B cell (primary cell): ENCODE measurements at regions of chr1 and their contacts with region 1.

Region 1: DNA sequence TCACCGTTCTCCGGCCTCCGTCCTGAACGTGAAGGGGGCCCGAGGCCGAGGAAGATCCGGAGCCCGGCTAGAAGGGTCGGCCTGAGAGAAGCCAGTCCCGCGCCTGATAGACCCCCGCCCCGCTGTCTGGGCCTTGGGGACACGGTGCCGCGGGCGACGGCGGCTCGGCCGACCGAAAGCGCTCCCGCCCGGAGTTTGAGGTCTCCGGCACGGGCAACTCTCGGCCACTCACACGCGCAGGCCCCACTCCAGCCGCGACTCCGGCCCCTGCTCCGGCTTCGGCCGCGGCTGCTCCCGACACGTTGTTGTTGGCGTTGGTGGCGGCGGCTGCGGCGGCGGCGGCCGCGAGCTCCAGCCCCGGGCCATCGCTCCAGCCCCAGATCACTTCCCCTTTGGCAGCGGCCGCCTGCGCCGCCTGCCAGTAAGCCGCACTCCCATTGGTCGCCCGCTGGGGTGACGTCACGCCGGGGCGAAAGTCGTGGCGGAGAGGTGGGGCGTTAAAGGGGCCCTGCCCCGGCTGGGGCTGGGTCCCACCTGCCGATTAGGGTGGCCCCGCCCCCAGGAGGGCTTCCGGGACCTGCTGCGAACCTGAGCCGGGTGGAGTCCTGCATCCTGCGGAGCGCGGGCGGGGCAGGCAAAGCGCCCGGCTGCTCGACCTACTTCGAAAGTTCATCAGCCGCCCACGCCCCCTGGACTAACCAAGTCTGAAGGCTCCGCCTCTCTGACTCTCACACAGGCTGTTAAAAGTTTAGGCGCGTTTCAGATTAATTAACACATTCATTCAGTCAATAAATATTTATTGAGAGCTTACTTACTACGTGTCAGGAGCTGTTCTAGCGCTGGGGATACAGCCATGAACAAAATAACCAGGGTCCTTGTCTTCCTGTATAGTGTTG is at the start of gene EFCAB14:
- DNase-seq: peak; percentile 99
- ATAC-seq: peak; percentile 99
- H3K4me3 ChIP-seq: peak within 1 kb of the TSS; percentile 84 to 95 (median 87)
- H3K4me3 Mint-ChIP-seq: peak within 1 kb of the TSS; percentile 89
- H3K27ac ChIP-seq: peak within 1 kb of the TSS; percentile 48 to 89
- H3K27ac Mint-ChIP-seq: peak within 1 kb of the TSS; percentile 95
- H3K4me1 ChIP-seq: peaks cover 24 to 25% of the 10 kb centered on the region in 2 donors
- H3K4me1 Mint-ChIP-seq: peaks cover 40% of the 10 kb centered on the region
- H3K27me3 ChIP-seq: no peaks in the 10 kb centered on the region
- H3K27me3 Mint-ChIP-seq: no peaks in the 10 kb centered on the region
- CTCF ChIP-seq: no peak
- total RNA-seq, gene EFCAB14: 90.0 and 98.8 TPM in 2 replicates

Region 2: GRCh38 chr1:46603858-46604549 is 115.0 kb before region 1 on chr1 and contains the start of gene MKNK1:
- CTCF ChIA-PET with region 1: interaction called, 5 read pairs
- POLR2A ChIA-PET with region 1: interaction called, 3 read pairs
- intact Hi-C with region 1: loop called (anchors 1 kb)
- DNase-seq: peak; percentile 98
- ATAC-seq: peak; percentile 99
- H3K4me3 ChIP-seq: peak within 1 kb of the TSS; percentile 72 to 95 (median 92)
- H3K4me3 Mint-ChIP-seq: peak within 1 kb of the TSS; percentile 96
- H3K27ac ChIP-seq: peak within 1 kb of the TSS; percentile 14 to 62
- H3K27ac Mint-ChIP-seq: peak within 1 kb of the TSS; percentile 95
- H3K4me1 ChIP-seq: peaks cover 12 to 15% of the 10 kb centered on the region in 2 donors
- H3K4me1 Mint-ChIP-seq: peaks cover 27% of the 10 kb centered on the region
- H3K27me3 ChIP-seq: no peaks in the 10 kb centered on the region
- H3K27me3 Mint-ChIP-seq: no peaks in the 10 kb centered on the region
- CTCF ChIP-seq: no peak
- total RNA-seq, gene MKNK1: 69.5 and 73.0 TPM in 2 replicates

Region 3: GRCh38 chr1:46616277-46617107 is 102.5 kb before region 1 on chr1 and contains the start of gene MOB3C:
- CTCF ChIA-PET with region 1: no interaction called
- POLR2A ChIA-PET with region 1: no interaction called
- intact Hi-C with region 1: loop called (anchors 1 kb)
- DNase-seq: peak; percentile 72
- ATAC-seq: peak; percentile 88
- H3K4me3 ChIP-seq: peak within 1 kb of the TSS; percentile 73 to 95 (median 82)
- H3K4me3 Mint-ChIP-seq: peak within 1 kb of the TSS; percentile 94
- H3K27ac ChIP-seq: peak within 1 kb of the TSS; percentile 74 to 85
- H3K27ac Mint-ChIP-seq: peak within 1 kb of the TSS; percentile 93
- H3K4me1 ChIP-seq: peaks cover 56 to 74% of the 10 kb centered on the region in 2 donors
- H3K4me1 Mint-ChIP-seq: peaks cover 61% of the 10 kb centered on the region
- H3K27me3 ChIP-seq: no peaks in the 10 kb centered on the region
- H3K27me3 Mint-ChIP-seq: no peaks in the 10 kb centered on the region
- CTCF ChIP-seq: no peak
- total RNA-seq, gene MOB3C: 19.2 and 19.3 TPM in 2 replicates

Region 4: GRCh38 chr1:46667782-46668760 is 50.9 kb before region 1 on chr1 and contains the start of gene ATPAF1:
- CTCF ChIA-PET with region 1: interaction called, 4 read pairs
- POLR2A ChIA-PET with region 1: no interaction called
- intact Hi-C with region 1: loop called (anchors 1 kb)
- DNase-seq: peak; percentile 72
- ATAC-seq: peak; percentile 83
- H3K4me3 ChIP-seq: peak within 1 kb of the TSS; percentile 61 to 89 (median 77)
- H3K4me3 Mint-ChIP-seq: peak within 1 kb of the TSS; percentile 85
- H3K27ac ChIP-seq: peak within 1 kb of the TSS in 1 of 2 donors; percentile 50
- H3K27ac Mint-ChIP-seq: peak within 1 kb of the TSS; percentile 51
- H3K4me1 ChIP-seq: peaks cover 13 to 16% of the 10 kb centered on the region in 2 donors
- H3K4me1 Mint-ChIP-seq: peaks cover 14% of the 10 kb centered on the region
- H3K27me3 ChIP-seq: no peaks in the 10 kb centered on the region
- H3K27me3 Mint-ChIP-seq: no peaks in the 10 kb centered on the region
- CTCF ChIP-seq: no peak
- total RNA-seq, gene ATPAF1: 20.8 and 22.0 TPM in 2 replicates

Region 5: GRCh38 chr1:47333922-47334764 is 615.2 kb after region 1 on chr1:
- CTCF ChIA-PET with region 1: no interaction called
- POLR2A ChIA-PET with region 1: interaction called, 3 read pairs
- intact Hi-C with region 1: loop called (anchors 10 kb)
- DNase-seq: peak; percentile 87
- ATAC-seq: peak; percentile 85
- H3K4me3 ChIP-seq: peak overlapping the region; percentile 59 to 97 (median 80)
- H3K4me3 Mint-ChIP-seq: peak overlapping the region; percentile 97
- H3K27ac ChIP-seq: peak overlapping the region; percentile 64 to 83
- H3K27ac Mint-ChIP-seq: peak overlapping the region; percentile 92
- H3K4me1 ChIP-seq: peaks cover 14 to 19% of the 10 kb centered on the region in 2 donors
- H3K4me1 Mint-ChIP-seq: peaks cover 17% of the 10 kb centered on the region
- H3K27me3 ChIP-seq: no peaks in the 10 kb centered on the region
- H3K27me3 Mint-ChIP-seq: no peaks in the 10 kb centered on the region
- CTCF ChIP-seq: no peak